WTC11 (cell line): ENCODE measurements at regions of chr14 and their contacts with region 1.

Region 1: DNA sequence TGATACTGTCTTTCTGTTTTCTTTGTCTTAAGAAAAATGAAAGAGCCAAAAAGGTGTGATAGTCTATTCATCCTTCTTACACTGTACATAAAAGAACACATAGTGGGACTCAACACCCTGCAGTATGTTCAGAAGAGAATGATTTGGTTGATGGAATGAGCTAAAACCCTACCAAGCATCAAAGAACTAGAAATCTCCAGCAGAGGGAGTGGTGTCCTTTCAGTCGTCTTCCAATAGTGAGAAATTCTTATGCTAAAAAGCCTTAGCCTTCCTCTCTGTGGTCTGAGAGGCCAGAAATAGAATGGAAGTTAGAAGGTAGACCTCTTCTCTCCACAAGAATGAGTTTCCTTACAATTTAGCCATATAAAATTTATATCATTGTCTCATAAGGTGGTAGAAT is 393.4 kb upstream of the SEL1L start:
- DNase-seq: no peak
- ATAC-seq: peak; percentile 87
- H3K4me3 Mint-ChIP-seq: no peak overlapping the region
- H3K27ac Mint-ChIP-seq: no peak overlapping the region
- H3K4me1 Mint-ChIP-seq: peaks cover 5% of the 10 kb centered on the region
- H3K27me3 Mint-ChIP-seq: no peaks in the 10 kb centered on the region
- CTCF ChIP-seq: no peak

Region 2: DNA sequence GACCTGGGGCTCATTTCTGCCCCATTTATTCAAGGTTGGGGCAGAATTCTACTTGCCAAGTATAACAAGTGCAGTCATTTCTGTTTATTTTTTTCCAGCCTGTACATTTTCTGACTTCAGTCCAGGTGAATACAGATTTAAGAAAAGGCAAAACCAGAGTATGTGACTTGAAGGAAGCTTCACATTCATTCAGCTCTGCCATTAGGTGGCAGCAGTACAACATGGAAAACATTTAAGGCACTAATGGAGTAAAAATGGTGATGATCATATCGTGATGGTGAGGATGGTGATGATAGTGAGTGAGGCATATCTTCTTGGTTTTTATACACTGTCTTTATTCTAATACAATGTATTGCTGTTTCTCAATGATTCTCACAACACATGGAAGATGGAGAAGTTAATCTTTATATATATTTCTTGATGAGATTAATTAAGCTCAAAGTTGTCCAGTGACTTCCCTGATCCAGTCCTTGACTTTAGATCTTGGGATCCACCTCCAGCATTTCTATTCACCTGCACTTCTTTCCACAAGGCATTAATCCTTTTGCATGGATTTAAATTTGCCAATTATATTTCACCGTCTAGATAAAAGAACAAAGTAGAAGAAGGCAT is 216.7 kb before region 1 on chr14:
- CTCF ChIA-PET with region 1: interaction called, 10 read pairs
- POLR2A ChIA-PET with region 1: no interaction called
- DNase-seq: no peak
- ATAC-seq: peak; percentile 50; the same call in 1 of the 2 replicates
- H3K4me3 Mint-ChIP-seq: no peak overlapping the region
- H3K27ac Mint-ChIP-seq: no peak overlapping the region
- H3K4me1 Mint-ChIP-seq: no peaks in the 10 kb centered on the region
- H3K27me3 Mint-ChIP-seq: no peaks in the 10 kb centered on the region; the same call in 1 of the 2 replicates
- CTCF ChIP-seq: no peak

Region 3: DNA sequence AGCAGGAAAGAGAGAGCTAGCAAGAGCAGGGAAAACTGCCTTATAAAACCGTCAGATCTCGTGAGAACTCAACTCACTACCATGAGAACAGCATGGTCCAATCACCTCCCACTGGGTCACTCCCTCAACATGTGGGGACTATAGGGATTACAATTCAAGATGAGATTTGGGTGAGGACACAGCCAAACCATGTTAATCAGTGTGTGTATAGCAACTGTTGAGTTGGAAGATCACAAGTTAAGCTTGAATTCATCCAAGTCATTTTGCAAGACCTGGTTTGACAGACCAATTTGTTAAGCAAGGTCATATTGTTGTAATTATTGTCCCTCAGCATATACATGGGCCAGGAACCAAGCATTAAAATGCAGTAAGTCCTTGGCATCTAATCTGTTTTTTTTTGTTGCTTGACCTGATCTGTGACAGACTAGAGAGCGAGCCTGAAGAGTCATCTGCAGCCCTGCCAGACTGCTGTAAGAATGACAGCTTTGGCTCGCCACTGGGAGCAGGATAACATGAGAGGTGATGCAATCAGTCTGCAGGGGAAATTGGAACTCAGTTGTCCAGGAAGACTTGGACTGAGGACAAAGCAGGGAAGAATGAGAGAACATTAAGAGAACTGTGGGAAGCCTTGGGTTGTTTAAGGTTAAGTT is 95.8 kb before region 1 on chr14:
- CTCF ChIA-PET with region 1: no interaction called
- POLR2A ChIA-PET with region 1: no interaction called
- DNase-seq: no peak
- ATAC-seq: peak; percentile 81
- H3K4me3 Mint-ChIP-seq: no peak overlapping the region
- H3K27ac Mint-ChIP-seq: peak overlapping the region; percentile 4; the same call in 1 of the 2 replicates
- H3K4me1 Mint-ChIP-seq: peaks cover 20% of the 10 kb centered on the region
- H3K27me3 Mint-ChIP-seq: no peaks in the 10 kb centered on the region; the same call in 1 of the 2 replicates
- CTCF ChIP-seq: no peak

Region 4: GRCh38 chr14:81946834-81947798 is 20.0 kb after region 1 on chr14:
- CTCF ChIA-PET with region 1: no interaction called
- POLR2A ChIA-PET with region 1: no interaction called
- DNase-seq: no peak
- ATAC-seq: peak; percentile 59; the same call in 1 of the 2 replicates
- H3K4me3 Mint-ChIP-seq: no peak overlapping the region
- H3K27ac Mint-ChIP-seq: no peak overlapping the region
- H3K4me1 Mint-ChIP-seq: peaks cover 11% of the 10 kb centered on the region; the same call in 1 of the 2 replicates
- H3K27me3 Mint-ChIP-seq: peaks cover 12% of the 10 kb centered on the region
- CTCF ChIP-seq: no peak